ENCODE measurements at regions of chr3 and their contacts with region 1.

Region 1: GRCh38 chr3:132641837-132642538 is 17.6 kb downstream of the ACAD11 start:
- DNase-seq: no peak
- H3K4me3 ChIP-seq: no peak overlapping the region
- H3K27ac ChIP-seq: no peak overlapping the region
- H3K4me1 ChIP-seq: no peaks in the 10 kb centered on the region
- H3K27me3 ChIP-seq: no peaks in the 10 kb centered on the region
- CTCF ChIP-seq: peak; percentile 78 to 82 (median 80)
- POLR2A ChIP-seq: no peak

Region 2: GRCh38 chr3:132380920-132381319 is 261.1 kb before region 1 on chr3:
- intact Hi-C with region 1: no loop called
- DNase-seq: no peak
- H3K4me3 ChIP-seq: no peak overlapping the region
- H3K27ac ChIP-seq: no peak overlapping the region
- H3K4me1 ChIP-seq: no peaks in the 10 kb centered on the region
- H3K27me3 ChIP-seq: no peaks in the 10 kb centered on the region
- CTCF ChIP-seq: no peak
- POLR2A ChIP-seq: no peak

Region 3: DNA sequence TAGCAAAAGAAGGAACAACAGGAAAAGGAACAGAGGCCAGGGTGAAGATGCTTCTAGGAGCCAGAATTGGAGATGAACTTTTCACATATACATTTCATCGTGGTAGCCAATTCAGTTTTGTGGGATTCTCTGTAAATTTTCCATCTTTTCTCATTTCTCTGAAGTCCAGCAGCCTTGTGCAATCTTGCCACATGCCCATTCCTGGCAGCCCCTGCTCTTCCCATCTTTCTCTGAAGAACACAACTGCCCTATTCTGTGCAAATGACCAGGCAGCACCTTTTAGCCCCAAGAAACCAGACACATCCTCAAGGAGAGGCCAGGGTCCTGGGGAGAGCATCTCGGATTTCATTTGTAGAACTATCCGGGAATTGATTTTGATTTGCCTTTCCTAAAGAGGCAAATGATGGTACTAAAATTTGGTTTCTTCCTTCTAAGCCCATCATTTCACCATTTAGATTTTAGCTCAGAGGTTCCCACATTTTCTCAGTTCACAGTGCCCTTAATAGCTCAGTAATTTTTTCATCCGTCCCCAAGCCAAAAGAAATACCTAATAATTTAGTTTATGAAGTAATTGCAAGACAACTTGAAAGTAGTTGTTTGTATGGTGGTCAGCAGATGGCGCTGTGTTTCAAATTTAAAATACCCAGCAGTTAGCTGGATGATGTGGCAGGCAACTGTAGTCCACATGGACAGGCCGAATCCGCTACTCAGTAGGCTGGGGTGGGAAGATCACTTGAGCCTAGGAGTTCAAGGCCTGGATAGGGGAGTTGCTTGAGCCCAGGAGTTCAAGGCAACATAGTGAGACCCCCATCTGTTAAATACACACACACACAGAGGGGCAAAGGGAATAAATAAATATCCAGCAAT is 106.2 kb before region 1 on chr3:
- intact Hi-C with region 1: loop called (anchors 5 kb)
- DNase-seq: peak; percentile 63 to 81
- H3K4me3 ChIP-seq: no peak overlapping the region
- H3K27ac ChIP-seq: peak overlapping the region; percentile 32 to 58
- H3K4me1 ChIP-seq: no peaks in the 10 kb centered on the region
- H3K27me3 ChIP-seq: no peaks in the 10 kb centered on the region
- CTCF ChIP-seq: peak; percentile 61 to 75 (median 66)
- POLR2A ChIP-seq: no peak

Region 4: GRCh38 chr3:132682201-132682600 is 40.2 kb after region 1 on chr3:
- intact Hi-C with region 1: no loop called
- DNase-seq: no peak
- H3K4me3 ChIP-seq: no peak overlapping the region
- H3K27ac ChIP-seq: no peak overlapping the region
- H3K4me1 ChIP-seq: no peaks in the 10 kb centered on the region
- H3K27me3 ChIP-seq: no peaks in the 10 kb centered on the region
- CTCF ChIP-seq: no peak
- POLR2A ChIP-seq: no peak

Measured in uterus (tissue), 4 donors.